Transverse colon (tissue), 4 donors: ENCODE measurements at regions of chr7 and their contacts with region 1.

Region 1: GRCh38 chr7:120927454-120928103 is 23.0 kb upstream of the ING3 start:
- DNase-seq: no peak
- H3K4me3 ChIP-seq: no peak overlapping the region
- H3K27ac ChIP-seq: no peak overlapping the region
- H3K4me1 ChIP-seq: peaks cover 0 to 7% (median 0%) of the 10 kb centered on the region in 4 donors
- H3K27me3 ChIP-seq: no peaks in the 10 kb centered on the region
- CTCF ChIP-seq: no peak
- EP300 ChIP-seq: no peak
- POLR2A ChIP-seq: no peak

Region 2: GRCh38 chr7:120867932-120868331 is 59.6 kb before region 1 on chr7:
- in situ Hi-C with region 1: loop called in 1 of 4 experiments (anchors 5 kb)
- intact Hi-C with region 1: no loop called
- DNase-seq: peak; percentile 22
- H3K4me3 ChIP-seq: no peak overlapping the region
- H3K27ac ChIP-seq: no peak overlapping the region
- H3K4me1 ChIP-seq: no peaks in the 10 kb centered on the region
- H3K27me3 ChIP-seq: no peaks in the 10 kb centered on the region
- CTCF ChIP-seq: no peak
- EP300 ChIP-seq: no peak
- POLR2A ChIP-seq: no peak

Region 3: GRCh38 chr7:121020652-121021051 is 93.1 kb after region 1 on chr7:
- in situ Hi-C with region 1: no loop called
- intact Hi-C with region 1: no loop called
- DNase-seq: no peak
- H3K4me3 ChIP-seq: no peak overlapping the region
- H3K27ac ChIP-seq: peak overlapping the region; percentile 22 to 74 (median 68)
- H3K4me1 ChIP-seq: peaks cover 19 to 63% (median 22%) of the 10 kb centered on the region in 4 donors
- H3K27me3 ChIP-seq: no peaks in the 10 kb centered on the region
- CTCF ChIP-seq: no peak
- EP300 ChIP-seq: no peak
- POLR2A ChIP-seq: no peak

Region 4: GRCh38 chr7:121313793-121314676 is 386.5 kb after region 1 on chr7:
- in situ Hi-C with region 1: no loop called
- intact Hi-C with region 1: no loop called
- DNase-seq: peak; percentile 12
- H3K4me3 ChIP-seq: no peak overlapping the region
- H3K27ac ChIP-seq: peak overlapping the region; percentile 24 to 67 (median 53)
- H3K4me1 ChIP-seq: peaks cover 0 to 16% (median 0%) of the 10 kb centered on the region in 4 donors
- H3K27me3 ChIP-seq: no peaks in the 10 kb centered on the region
- CTCF ChIP-seq: no peak
- EP300 ChIP-seq: no peak
- POLR2A ChIP-seq: no peak